ENCODE measurements at regions of chr6 and their contacts with region 1.

Region 1: GRCh38 chr6:99568103-99568933 is at the start of gene CCNC:
- DNase-seq: peak; percentile 81 to 93 (median 88)
- ATAC-seq: peak; percentile 94
- H3K4me3 ChIP-seq: peak within 1 kb of the TSS; percentile 93
- H3K4me3 Mint-ChIP-seq: peak within 1 kb of the TSS; percentile 98
- H3K27ac ChIP-seq: peak within 1 kb of the TSS; percentile 76
- H3K27ac Mint-ChIP-seq: peak within 1 kb of the TSS; percentile 96
- H3K4me1 ChIP-seq: peaks cover 17% of the 10 kb centered on the region
- H3K4me1 Mint-ChIP-seq: peaks cover 40% of the 10 kb centered on the region
- H3K27me3 ChIP-seq: no peaks in the 10 kb centered on the region
- H3K27me3 Mint-ChIP-seq: no peaks in the 10 kb centered on the region
- CTCF ChIP-seq: no peak
- total RNA-seq, gene CCNC: 48.0 to 50.8 TPM

Region 2: GRCh38 chr6:99393698-99394531 is 174.4 kb before region 1 on chr6 and contains the start of gene COQ3:
- CTCF ChIA-PET with region 1: no interaction called
- POLR2A ChIA-PET with region 1: no interaction called
- intact Hi-C with region 1: loop called in 1 of 2 experiments (anchors 1 kb)
- DNase-seq: peak; percentile 28 to 79 (median 65)
- ATAC-seq: peak; percentile 70
- H3K4me3 ChIP-seq: peak within 1 kb of the TSS; percentile 73 to 94
- H3K4me3 Mint-ChIP-seq: peak within 1 kb of the TSS; percentile 95
- H3K27ac ChIP-seq: peak within 1 kb of the TSS; percentile 57 to 62
- H3K27ac Mint-ChIP-seq: peak within 1 kb of the TSS; percentile 91
- H3K4me1 ChIP-seq: peaks cover 5% of the 10 kb centered on the region
- H3K4me1 Mint-ChIP-seq: peaks cover 25% of the 10 kb centered on the region
- H3K27me3 ChIP-seq: no peaks in the 10 kb centered on the region
- H3K27me3 Mint-ChIP-seq: no peaks in the 10 kb centered on the region
- CTCF ChIP-seq: no peak
- total RNA-seq, gene COQ3: 1.6 to 1.9 TPM

Region 3: DNA sequence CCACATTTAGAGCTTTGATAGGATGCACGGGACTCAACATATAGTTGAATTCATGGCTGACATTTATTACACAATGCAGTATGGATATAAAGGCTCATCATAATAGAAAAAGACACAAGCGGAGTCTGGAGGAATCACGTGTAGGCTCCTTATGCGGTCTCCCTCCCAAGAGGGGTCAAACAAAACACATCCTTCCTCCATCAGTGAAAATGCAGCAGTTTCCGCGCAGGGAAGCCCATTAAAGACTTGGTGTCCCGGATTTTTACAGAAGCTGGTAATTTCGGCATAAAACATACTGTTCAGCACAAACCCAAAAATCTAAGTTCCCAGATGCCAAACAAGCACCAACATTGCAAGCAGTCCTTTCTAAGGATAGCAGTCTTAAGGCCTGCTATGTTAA is 54.2 kb before region 1 on chr6:
- CTCF ChIA-PET with region 1: interaction called, 8 read pairs
- POLR2A ChIA-PET with region 1: interaction called, 6 read pairs
- intact Hi-C with region 1: loop called (anchors 1 to 2 kb)
- DNase-seq: no peak
- ATAC-seq: no peak
- H3K4me3 ChIP-seq: no peak overlapping the region
- H3K4me3 Mint-ChIP-seq: peak overlapping the region; percentile 93
- H3K27ac ChIP-seq: no peak overlapping the region
- H3K27ac Mint-ChIP-seq: peak overlapping the region; percentile 93
- H3K4me1 ChIP-seq: peaks cover 13% of the 10 kb centered on the region
- H3K4me1 Mint-ChIP-seq: peaks cover 33% of the 10 kb centered on the region
- H3K27me3 ChIP-seq: no peaks in the 10 kb centered on the region
- H3K27me3 Mint-ChIP-seq: no peaks in the 10 kb centered on the region
- CTCF ChIP-seq: no peak

Region 4: GRCh38 chr6:99520855-99521632 is 47.3 kb before region 1 on chr6:
- CTCF ChIA-PET with region 1: interaction called, 8 read pairs
- POLR2A ChIA-PET with region 1: interaction called, 9 read pairs
- intact Hi-C with region 1: loop called in 1 of 2 experiments (anchors 1 kb)
- DNase-seq: peak; percentile 37 to 83 (median 66)
- ATAC-seq: peak; percentile 91
- H3K4me3 ChIP-seq: peak overlapping the region; percentile 79 to 94
- H3K4me3 Mint-ChIP-seq: peak overlapping the region; percentile 96
- H3K27ac ChIP-seq: peak overlapping the region; percentile 48 to 74
- H3K27ac Mint-ChIP-seq: peak overlapping the region; percentile 92
- H3K4me1 ChIP-seq: peaks cover 12% of the 10 kb centered on the region
- H3K4me1 Mint-ChIP-seq: peaks cover 41% of the 10 kb centered on the region
- H3K27me3 ChIP-seq: no peaks in the 10 kb centered on the region
- H3K27me3 Mint-ChIP-seq: no peaks in the 10 kb centered on the region
- CTCF ChIP-seq: peak; percentile 89

Region 5: DNA sequence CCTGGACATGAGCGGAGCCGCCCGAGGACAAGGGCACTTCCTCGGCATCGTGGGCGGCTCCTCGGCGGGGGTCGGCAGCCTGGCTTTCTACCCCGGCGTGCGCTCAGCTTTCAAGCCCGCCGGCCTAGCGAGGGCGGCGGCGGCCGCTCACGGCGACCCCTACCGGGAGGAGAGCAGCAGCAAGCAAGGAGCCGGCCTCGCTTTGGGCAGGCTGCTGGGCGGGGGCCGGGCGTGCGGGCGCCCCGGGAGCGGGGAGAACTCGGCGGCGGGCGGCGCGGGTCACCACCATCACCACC is 45.0 kb after region 1 on chr6:
- CTCF ChIA-PET with region 1: interaction called, 5 read pairs
- POLR2A ChIA-PET with region 1: no interaction called
- intact Hi-C with region 1: loop called in 1 of 2 experiments (anchors 2 kb)
- DNase-seq: peak in 3 of 9 experiments; percentile 34 to 61 (median 56)
- ATAC-seq: peak; percentile 30
- H3K4me3 ChIP-seq: peak overlapping the region; percentile 13 to 18
- H3K4me3 Mint-ChIP-seq: no peak overlapping the region
- H3K27ac ChIP-seq: no peak overlapping the region
- H3K27ac Mint-ChIP-seq: no peak overlapping the region
- H3K4me1 ChIP-seq: peaks cover 18% of the 10 kb centered on the region
- H3K4me1 Mint-ChIP-seq: peaks cover 28% of the 10 kb centered on the region
- H3K27me3 ChIP-seq: peaks cover 52 to 54% of the 10 kb centered on the region in 2 experiments
- H3K27me3 Mint-ChIP-seq: peaks cover 81% of the 10 kb centered on the region
- CTCF ChIP-seq: no peak

Measured in CD8-positive, alpha-beta T cell (primary cell).